Heart right ventricle (tissue), 16 donors: ENCODE measurements at regions of chr15 and their contacts with region 1.

Region 1: DNA sequence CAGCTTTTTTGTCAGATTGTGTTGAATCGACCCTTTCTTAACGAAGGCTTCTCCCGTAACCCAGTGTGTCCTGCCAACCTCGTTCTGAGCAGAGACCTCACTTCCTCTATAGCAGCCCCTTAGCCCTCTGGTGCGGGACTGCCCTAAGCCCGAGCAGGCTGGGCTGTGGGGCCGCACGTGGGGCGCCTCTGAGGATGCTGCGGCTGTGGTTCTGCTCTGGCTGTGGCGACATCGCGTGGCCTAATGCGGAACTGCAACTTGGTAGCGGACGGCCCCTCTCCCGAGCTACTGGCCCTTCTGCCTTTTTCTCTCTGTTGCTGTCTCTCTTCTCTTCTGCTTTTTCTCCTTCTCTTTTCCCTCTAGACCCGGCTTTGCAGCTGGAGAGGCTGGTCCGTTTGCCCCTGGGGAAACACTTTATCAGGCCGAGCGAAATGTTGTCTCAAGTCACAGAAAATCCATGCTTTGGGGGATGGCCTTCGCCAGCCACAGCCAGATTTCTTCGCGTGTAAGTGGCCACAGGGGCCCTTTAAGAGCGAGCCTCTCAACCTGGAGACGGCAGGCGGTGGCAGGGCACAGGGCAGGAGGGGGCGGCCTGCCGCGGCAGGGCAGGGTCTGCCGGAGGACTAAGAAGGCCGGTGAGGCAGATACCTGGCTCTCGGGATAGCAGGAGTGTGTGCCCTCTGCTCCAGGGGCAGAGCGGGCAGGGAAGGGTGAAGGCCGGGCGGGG is 19.4 kb upstream of the KIF23 start:
- DNase-seq: peak; percentile 81 to 87
- ATAC-seq: peak; percentile 88 to 93 (median 91)
- H3K4me3 ChIP-seq: peak overlapping the region in 3 of 10 donors; percentile 10 to 24 (median 16)
- H3K27ac ChIP-seq: no peak overlapping the region
- H3K4me1 ChIP-seq: peaks cover 0 to 14% (median 9%) of the 10 kb centered on the region in 9 donors
- H3K27me3 ChIP-seq: peaks cover 0 to 13% (median 0%) of the 10 kb centered on the region in 7 donors
- CTCF ChIP-seq: peak; percentile 94 to 99 (median 97)

Region 2: DNA sequence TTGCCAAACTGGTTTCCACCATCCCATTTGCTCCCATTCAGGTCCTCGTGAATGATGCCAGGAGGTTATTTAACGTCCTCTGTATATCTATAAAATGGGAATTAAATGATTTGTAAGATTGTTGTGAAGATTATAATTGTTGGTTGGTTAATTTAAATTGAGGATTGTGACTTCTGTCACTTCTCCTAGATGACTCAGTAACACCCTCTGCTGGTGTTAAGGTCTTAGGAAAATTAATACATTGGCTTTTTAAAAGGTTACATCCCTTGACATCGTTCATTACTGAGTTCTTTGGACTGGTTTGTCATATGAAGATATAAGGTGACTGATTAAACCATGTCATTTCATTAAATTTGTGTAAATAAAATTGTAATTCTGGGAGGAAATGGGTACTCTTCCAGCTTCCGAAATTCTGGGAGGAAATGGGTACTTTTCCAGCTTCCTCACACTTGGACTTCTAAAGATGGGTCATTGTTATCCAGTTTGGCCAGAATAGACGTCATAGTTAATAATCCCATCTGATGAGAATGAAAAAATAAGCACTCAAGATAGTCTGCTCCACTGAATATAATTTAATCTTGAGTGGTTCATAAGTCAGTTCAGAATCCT is 129.3 kb before region 1 on chr15:
- intact Hi-C with region 1: loop called in 9 of 10 experiments (anchors 5 to 10 kb)
- DNase-seq: no peak
- ATAC-seq: no peak
- H3K4me3 ChIP-seq: no peak overlapping the region
- H3K27ac ChIP-seq: no peak overlapping the region
- H3K4me1 ChIP-seq: peaks cover 0 to 11% (median 0%) of the 10 kb centered on the region in 9 donors
- H3K27me3 ChIP-seq: no peaks in the 10 kb centered on the region
- CTCF ChIP-seq: peak; percentile 45 to 76 (median 67)

Region 3: DNA sequence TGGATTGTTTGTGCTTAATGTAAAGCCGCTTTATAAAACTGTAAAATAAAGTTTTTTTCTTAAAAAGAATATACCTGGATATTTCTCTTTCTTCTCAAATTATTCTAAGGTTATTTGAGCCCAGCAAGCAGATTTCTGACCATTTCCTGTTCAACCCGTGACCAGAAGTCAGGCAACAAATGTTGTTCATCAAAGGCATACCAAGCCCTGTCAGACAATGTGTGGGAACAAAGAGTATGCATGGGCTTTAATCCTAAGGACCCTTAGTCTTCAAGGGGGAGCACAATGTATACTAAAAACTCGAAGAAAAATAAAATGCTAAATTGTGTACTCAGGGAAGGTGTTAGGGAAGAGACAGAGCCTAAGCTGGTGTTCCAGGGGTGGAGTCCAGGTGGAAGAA is 122.6 kb before region 1 on chr15:
- intact Hi-C with region 1: loop called in 9 of 10 experiments (anchors 5 to 10 kb)
- DNase-seq: no peak
- ATAC-seq: no peak
- H3K4me3 ChIP-seq: no peak overlapping the region
- H3K27ac ChIP-seq: no peak overlapping the region
- H3K4me1 ChIP-seq: peaks cover 0 to 18% (median 4%) of the 10 kb centered on the region in 9 donors
- H3K27me3 ChIP-seq: no peaks in the 10 kb centered on the region
- CTCF ChIP-seq: no peak

Region 4: GRCh38 chr15:69311319-69311721 is 83.4 kb before region 1 on chr15:
- intact Hi-C with region 1: no loop called
- DNase-seq: no peak
- ATAC-seq: no peak
- H3K4me3 ChIP-seq: no peak overlapping the region
- H3K27ac ChIP-seq: no peak overlapping the region
- H3K4me1 ChIP-seq: peaks cover 0 to 12% (median 0%) of the 10 kb centered on the region in 9 donors
- H3K27me3 ChIP-seq: peaks cover 0 to 4% (median 0%) of the 10 kb centered on the region in 7 donors
- CTCF ChIP-seq: no peak

Region 5: DNA sequence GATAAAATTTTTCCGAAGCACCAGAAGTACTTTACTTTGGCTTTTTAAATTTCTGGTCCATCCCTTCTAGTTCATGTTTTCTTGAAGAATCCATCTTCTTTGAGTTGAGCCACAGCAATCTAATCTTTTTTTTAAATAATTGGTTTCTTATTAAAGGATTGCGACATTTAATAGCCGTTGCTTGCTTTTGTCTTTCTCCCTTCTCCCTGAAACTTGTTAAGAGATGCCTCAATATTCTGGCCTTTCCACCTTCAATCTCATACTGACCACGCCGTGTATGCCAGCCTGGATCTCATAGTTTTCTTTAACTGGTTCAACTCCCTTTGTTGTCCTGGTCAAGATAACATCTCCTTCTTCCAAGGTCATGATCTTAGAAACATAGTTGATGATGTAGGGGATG is 39.5 kb after region 1 on chr15:
- intact Hi-C with region 1: no loop called
- DNase-seq: no peak
- ATAC-seq: no peak
- H3K4me3 ChIP-seq: no peak overlapping the region
- H3K27ac ChIP-seq: no peak overlapping the region
- H3K4me1 ChIP-seq: peaks cover 0 to 7% (median 0%) of the 10 kb centered on the region in 9 donors
- H3K27me3 ChIP-seq: no peaks in the 10 kb centered on the region
- CTCF ChIP-seq: no peak